Activated T-helper 2 cell treated with anti-CD3 and anti-CD28 coated beads, Interferon-gamma antibody, Interleukin-2, Interleukin-4, amounts not matched to agents 10 μg/mL and 5 μg/mL and 100 μg/mL, durations not matched to agents 14 hours and 24 hours and 36 hours (primary cell): ENCODE measurements at regions of chr1 and their contacts with region 1.

Region 1: DNA sequence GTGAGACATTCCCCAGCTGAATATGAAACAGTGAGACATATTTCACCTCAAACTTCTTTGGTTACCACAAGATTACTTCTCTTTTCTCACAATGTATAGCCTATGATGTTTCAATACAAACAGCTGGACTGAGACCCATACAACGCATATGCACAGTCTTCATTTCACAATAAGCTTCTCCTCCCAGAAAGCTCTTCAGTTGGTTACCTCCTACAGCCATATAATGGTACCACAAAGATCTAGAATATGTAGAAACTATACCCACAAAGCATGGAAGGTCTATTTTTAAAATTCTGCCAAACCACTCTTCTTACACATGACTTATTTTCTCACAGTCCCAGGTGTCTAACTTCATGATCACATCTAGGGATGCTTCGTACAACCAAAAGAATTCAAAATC is 70.8 kb downstream of the JAK1 start:
- DNase-seq: no peak
- H3K4me3 Mint-ChIP-seq: no peak overlapping the region
- H3K27ac Mint-ChIP-seq: no peak overlapping the region
- H3K4me1 Mint-ChIP-seq: peaks cover 68% of the 10 kb centered on the region
- H3K27me3 Mint-ChIP-seq: no peaks in the 10 kb centered on the region

Region 2: GRCh38 chr1:64906447-64906846 is 10.9 kb after region 1 on chr1:
- intact Hi-C with region 1: loop called (anchors 2 kb)
- DNase-seq: no peak
- H3K4me3 Mint-ChIP-seq: peak overlapping the region; percentile 0
- H3K27ac Mint-ChIP-seq: peak overlapping the region; percentile 63
- H3K4me1 Mint-ChIP-seq: peaks cover 53% of the 10 kb centered on the region
- H3K27me3 Mint-ChIP-seq: no peaks in the 10 kb centered on the region

Region 3: GRCh38 chr1:64912191-64912590 is 16.7 kb after region 1 on chr1:
- intact Hi-C with region 1: loop called (anchors 2 kb)
- DNase-seq: no peak
- H3K4me3 Mint-ChIP-seq: no peak overlapping the region
- H3K27ac Mint-ChIP-seq: peak overlapping the region; percentile 6
- H3K4me1 Mint-ChIP-seq: peaks cover 64% of the 10 kb centered on the region
- H3K27me3 Mint-ChIP-seq: no peaks in the 10 kb centered on the region